ENCODE measurements at regions of chr10 and their contacts with region 1.

Region 1: DNA sequence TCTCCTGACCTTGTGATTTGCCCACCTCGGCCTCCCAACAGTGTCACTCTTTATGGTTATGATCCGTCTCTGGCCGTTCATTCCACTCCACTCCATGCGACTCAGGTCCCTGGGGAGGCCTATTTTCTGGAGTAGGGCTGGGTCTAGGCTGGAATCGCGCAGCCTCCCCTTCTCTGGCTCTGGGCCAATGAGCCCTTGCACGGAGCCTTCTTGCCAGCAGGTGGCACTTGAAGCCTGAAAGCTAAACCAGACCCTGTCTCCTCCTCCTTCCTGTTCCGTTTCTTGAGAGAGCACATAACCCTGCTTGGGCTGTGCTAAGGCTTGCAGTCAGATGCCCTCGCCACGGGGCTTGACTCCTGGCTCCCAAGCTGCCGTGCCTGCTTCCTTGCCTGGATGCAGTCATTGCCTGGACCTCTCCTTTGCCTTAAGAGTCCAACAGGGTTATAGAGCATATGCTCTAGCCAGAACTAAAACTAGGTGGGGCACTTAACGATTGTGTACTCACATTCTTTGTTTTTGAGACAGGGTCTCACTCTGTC is 9.6 kb upstream of the DNAJB12 start:
- DNase-seq: peak; percentile 75 to 94 (median 86)

Region 2: GRCh38 chr10:72834183-72834825 is 470.0 kb after region 1 on chr10:
- intact Hi-C with region 1: loop called (anchors 5 kb)
- DNase-seq: peak in 36 of 42 donors; percentile 16 to 84 (median 60)